Activated B cell treated with CpG ODN at 0.5 μM for 24 hours (primary cell): ENCODE measurements at regions of chrX and their contacts with region 1.

Region 1: DNA sequence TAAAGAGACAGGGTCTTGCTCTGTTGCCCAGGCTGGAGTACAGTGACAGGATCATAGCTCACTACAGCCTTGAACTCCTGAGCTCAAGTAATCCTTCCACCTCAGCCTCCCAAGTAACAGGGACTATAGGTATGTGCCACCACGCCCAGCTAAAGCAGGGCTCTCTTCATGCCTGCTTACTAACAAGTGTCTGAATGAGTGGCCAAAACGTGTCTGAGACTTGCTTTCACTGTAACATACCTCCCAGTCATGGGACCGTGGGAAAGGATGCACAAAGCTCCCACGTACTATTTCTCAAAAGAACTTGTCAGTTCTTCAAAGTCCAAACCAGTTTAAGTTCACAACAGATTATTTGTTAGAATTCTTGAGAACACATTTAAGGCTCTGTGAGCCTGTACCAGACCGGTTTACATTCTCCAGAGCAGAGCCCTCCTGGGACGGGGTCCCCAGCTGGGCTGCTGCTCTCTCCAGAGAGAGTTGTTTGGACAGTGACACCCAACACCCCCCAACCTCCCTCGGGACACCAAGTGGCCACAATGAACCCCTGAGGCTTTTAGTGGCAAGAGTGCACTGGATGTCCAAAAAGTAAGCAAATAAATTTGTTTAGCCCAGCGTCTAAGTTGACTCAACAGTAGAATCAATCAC is 24.1 kb downstream of the SH3KBP1 start:
- DNase-seq: no peak
- ATAC-seq: peak; percentile 64
- H3K4me3 Mint-ChIP-seq: peak overlapping the region; percentile 75
- H3K27ac Mint-ChIP-seq: peak overlapping the region; percentile 96
- H3K4me1 Mint-ChIP-seq: peaks cover 91% of the 10 kb centered on the region
- H3K27me3 Mint-ChIP-seq: no peaks in the 10 kb centered on the region
- CTCF ChIP-seq: no peak

Region 2: GRCh38 chrX:19849464-19850080 is 13.8 kb before region 1 on chrX:
- CTCF ChIA-PET with region 1: interaction called, 4 read pairs
- POLR2A ChIA-PET with region 1: interaction called, 7 read pairs
- intact Hi-C with region 1: loop called (anchors 1 kb)
- DNase-seq: no peak
- ATAC-seq: peak; percentile 91
- H3K4me3 Mint-ChIP-seq: peak overlapping the region; percentile 70
- H3K27ac Mint-ChIP-seq: peak overlapping the region; percentile 89
- H3K4me1 Mint-ChIP-seq: peaks cover 66% of the 10 kb centered on the region
- H3K27me3 Mint-ChIP-seq: no peaks in the 10 kb centered on the region
- CTCF ChIP-seq: no peak

Region 3: GRCh38 chrX:19875050-19875431 is 11.7 kb after region 1 on chrX:
- CTCF ChIA-PET with region 1: no interaction called
- POLR2A ChIA-PET with region 1: interaction called, 4 read pairs
- intact Hi-C with region 1: loop called (anchors 1 kb)
- DNase-seq: no peak
- ATAC-seq: peak; percentile 79
- H3K4me3 Mint-ChIP-seq: peak overlapping the region; percentile 69
- H3K27ac Mint-ChIP-seq: peak overlapping the region; percentile 84
- H3K4me1 Mint-ChIP-seq: peaks cover 86% of the 10 kb centered on the region
- H3K27me3 Mint-ChIP-seq: no peaks in the 10 kb centered on the region
- CTCF ChIP-seq: no peak

Region 4: DNA sequence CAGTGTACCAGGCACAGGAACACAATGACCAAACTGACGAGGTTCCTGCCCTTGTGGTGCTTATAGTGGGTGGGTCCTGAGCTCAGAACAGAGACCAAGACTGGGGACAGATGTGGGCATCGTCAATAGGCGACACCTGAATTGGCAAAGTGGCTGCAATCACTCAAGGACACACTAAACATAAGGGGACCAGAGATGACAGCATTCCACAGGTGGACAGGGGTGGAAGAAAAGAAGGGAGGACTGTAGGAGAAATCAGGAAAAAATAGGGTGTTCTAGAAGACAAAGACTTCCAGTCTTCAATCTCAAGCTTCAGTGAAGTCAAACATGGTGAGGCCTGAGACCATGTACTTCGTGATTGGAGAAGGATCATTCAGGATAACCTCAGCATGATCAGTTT is 18.2 kb after region 1 on chrX:
- CTCF ChIA-PET with region 1: no interaction called
- POLR2A ChIA-PET with region 1: interaction called, 10 read pairs
- intact Hi-C with region 1: no loop called
- DNase-seq: no peak
- ATAC-seq: no peak
- H3K4me3 Mint-ChIP-seq: no peak overlapping the region
- H3K27ac Mint-ChIP-seq: peak overlapping the region; percentile 57
- H3K4me1 Mint-ChIP-seq: peaks cover 90% of the 10 kb centered on the region
- H3K27me3 Mint-ChIP-seq: no peaks in the 10 kb centered on the region
- CTCF ChIP-seq: no peak

Region 5: DNA sequence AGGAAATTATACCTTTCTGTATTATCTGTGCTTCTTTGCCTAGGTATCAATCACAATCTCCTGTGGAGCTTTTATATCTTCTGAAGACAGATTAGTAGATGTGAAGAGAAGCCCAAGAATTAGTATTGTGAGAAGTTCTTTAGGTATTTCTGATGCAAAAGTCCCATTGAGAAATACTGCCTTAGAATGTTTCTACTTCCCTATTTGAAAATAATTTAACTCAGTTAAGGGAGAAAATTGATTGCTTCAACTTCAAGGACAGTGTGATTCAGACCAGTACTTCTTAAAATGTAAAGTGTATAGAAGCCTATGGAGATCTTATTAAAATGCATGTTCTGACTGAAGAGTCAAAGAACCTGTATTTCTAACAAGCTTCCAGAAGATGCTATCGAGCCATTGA is 269.3 kb after region 1 on chrX:
- CTCF ChIA-PET with region 1: no interaction called
- POLR2A ChIA-PET with region 1: no interaction called
- intact Hi-C with region 1: no loop called
- DNase-seq: no peak
- ATAC-seq: no peak
- H3K4me3 Mint-ChIP-seq: no peak overlapping the region
- H3K27ac Mint-ChIP-seq: no peak overlapping the region
- H3K4me1 Mint-ChIP-seq: peaks cover 3% of the 10 kb centered on the region
- H3K27me3 Mint-ChIP-seq: no peaks in the 10 kb centered on the region
- CTCF ChIP-seq: no peak